ENCODE measurements at regions of chr14 and their contacts with region 1.

Region 1: DNA sequence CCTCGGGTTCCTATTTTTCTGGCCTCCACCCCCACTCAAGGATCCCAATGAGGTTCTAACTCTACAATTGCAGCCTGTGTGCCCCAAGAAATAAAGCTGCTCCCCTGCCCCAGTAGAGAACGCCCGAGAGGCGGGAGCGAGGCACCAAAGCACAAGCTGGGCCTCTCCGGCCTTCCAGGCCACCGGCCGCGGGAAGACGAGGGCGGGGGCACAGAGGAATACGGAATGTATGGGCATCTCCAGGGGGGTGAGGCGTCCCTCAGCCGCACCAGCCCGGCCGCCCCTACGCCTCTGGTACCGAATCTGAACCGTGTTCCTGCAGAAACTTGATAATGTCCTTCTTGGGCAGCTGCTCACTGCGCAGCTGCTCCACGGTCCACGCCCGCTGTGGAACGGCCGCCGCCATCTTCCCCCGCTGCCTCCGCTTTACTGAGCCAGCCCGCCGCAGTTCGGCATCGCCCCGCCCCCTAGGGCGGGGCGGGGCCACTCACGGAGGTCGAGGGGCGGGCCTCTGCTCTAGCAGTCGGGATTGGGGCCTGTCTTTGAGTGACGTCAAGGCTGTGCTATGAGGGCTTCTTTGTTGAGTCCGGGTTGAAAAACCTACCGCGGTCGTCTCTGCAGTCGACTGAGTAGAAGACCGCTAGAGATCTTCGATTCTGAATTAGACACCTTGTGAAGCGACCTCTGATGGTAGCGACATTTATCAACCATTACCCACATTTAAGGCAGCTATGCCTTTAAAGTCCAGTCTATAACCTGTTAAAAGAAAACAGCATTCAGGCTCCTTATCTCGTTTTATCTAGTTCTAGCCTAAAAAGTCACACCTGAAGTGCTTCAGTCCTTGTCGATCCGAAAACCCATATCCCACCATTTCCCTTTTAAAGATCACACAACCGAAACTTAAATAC is at the start of gene FKBP3:
- DNase-seq: peak; percentile 97
- H3K4me3 Mint-ChIP-seq: peak within 1 kb of the TSS; percentile 99
- H3K27ac Mint-ChIP-seq: peak within 1 kb of the TSS; percentile 98
- H3K4me1 Mint-ChIP-seq: peaks cover 37% of the 10 kb centered on the region
- H3K27me3 Mint-ChIP-seq: no peaks in the 10 kb centered on the region
- total RNA-seq, gene FKBP3: 47.6 to 50.8 TPM

Region 2: DNA sequence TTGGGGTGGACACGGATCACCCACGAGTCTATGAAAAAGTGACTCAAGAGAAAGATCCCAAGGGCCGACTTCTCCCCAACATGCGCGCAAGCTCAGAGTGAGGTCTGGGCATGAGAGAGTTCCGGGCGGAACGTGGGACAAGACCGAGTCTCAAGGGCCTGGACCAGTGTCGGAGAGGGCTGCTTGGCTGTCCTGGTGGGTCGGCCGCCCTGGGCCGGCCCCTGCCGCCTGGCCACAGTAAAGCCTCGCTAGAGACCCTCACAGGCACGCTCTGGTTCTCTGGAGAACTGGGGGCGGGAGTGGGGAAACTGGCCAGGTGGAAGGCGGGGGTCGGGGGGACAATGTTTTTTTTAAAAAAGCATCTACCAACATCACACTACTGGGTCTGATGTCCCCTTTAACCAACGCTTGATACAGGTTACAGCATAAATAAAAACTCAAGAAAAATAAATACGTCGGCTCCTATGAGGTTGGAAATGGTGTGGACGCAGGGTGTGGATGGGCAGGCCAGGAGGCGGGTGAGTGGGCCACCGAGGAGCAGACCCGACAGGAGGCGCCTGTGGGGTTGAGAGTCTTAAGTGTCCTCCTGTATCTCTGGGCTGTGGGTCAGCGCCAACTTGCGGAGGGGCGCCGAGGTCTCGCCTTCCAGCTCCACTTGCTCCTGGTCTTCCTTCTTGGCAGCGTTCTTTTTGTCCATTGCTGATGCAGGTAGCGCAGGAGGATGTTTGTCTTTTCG is 247.3 kb before region 1 on chr14:
- CTCF ChIA-PET with region 1: no interaction called
- intact Hi-C with region 1: no loop called
- DNase-seq: no peak
- H3K4me3 Mint-ChIP-seq: no peak overlapping the region
- H3K27ac Mint-ChIP-seq: no peak overlapping the region
- H3K4me1 Mint-ChIP-seq: peaks cover 1% of the 10 kb centered on the region
- H3K27me3 Mint-ChIP-seq: no peaks in the 10 kb centered on the region

Region 3: GRCh38 chr14:44897045-44897844 is 237.1 kb before region 1 on chr14:
- CTCF ChIA-PET with region 1: no interaction called
- intact Hi-C with region 1: loop called (anchors 1 kb)
- DNase-seq: peak; percentile 99
- H3K4me3 Mint-ChIP-seq: peak overlapping the region; percentile 89
- H3K27ac Mint-ChIP-seq: peak overlapping the region; percentile 83
- H3K4me1 Mint-ChIP-seq: peaks cover 13% of the 10 kb centered on the region
- H3K27me3 Mint-ChIP-seq: no peaks in the 10 kb centered on the region

Region 4: DNA sequence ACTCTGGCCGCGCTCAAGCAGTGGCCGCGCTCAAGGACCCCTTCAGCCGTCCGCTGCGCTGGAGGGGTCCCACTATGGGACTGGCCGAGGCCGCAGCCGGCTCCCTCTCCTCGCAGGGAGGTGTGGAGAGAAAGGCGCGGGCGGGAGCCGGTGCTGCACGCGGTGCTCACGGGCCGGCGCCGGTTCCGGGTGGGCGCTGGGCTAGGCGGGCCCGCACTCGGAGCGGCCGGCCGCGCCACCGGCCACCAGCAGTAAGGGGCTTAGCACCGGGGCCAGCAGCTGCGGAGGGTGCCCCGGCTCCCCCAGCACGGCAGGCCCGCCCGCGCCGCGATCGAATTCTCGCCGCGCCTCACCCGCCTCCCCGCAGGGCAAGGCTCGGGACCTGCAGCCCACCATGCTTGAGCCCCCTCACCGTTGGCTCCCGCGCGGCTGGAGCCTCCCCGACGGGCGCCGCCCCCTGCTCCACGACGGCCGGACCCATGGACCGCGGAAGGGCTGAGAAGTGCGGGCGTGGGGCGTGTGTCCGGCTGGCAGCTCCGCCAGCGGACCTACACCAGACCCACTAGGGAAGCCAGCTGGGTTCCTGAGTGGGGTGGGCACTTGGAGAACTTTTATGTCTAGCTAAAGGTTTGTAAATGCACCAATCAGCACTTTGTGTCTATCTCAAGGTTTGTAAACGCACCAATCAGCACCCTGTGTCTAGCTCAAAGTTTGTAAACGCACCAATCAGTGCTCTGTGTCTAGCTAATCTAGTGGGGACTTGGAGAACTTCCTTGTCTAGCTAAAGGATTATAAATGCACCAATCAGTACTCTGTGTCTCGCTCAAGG is 222.1 kb before region 1 on chr14:
- CTCF ChIA-PET with region 1: interaction called, 3 read pairs
- intact Hi-C with region 1: loop called (anchors 1 kb)
- DNase-seq: no peak
- H3K4me3 Mint-ChIP-seq: no peak overlapping the region
- H3K27ac Mint-ChIP-seq: no peak overlapping the region
- H3K4me1 Mint-ChIP-seq: peaks cover 9% of the 10 kb centered on the region
- H3K27me3 Mint-ChIP-seq: peaks cover 23% of the 10 kb centered on the region

Region 5: GRCh38 chr14:45083971-45084722 is 50.2 kb before region 1 on chr14 and contains the start of gene PRPF39:
- CTCF ChIA-PET with region 1: no interaction called
- intact Hi-C with region 1: loop called (anchors 1 kb)
- DNase-seq: peak; percentile 94
- H3K4me3 Mint-ChIP-seq: peak within 1 kb of the TSS; percentile 96
- H3K27ac Mint-ChIP-seq: peak within 1 kb of the TSS; percentile 93
- H3K4me1 Mint-ChIP-seq: peaks cover 49% of the 10 kb centered on the region
- H3K27me3 Mint-ChIP-seq: no peaks in the 10 kb centered on the region
- total RNA-seq, gene PRPF39: 32.0 to 35.6 TPM

Region 6: GRCh38 chr14:45089813-45090212 is 44.5 kb before region 1 on chr14:
- CTCF ChIA-PET with region 1: no interaction called
- intact Hi-C with region 1: loop called (anchors 1 kb)
- DNase-seq: peak; percentile 44
- H3K4me3 Mint-ChIP-seq: no peak overlapping the region
- H3K27ac Mint-ChIP-seq: peak overlapping the region; percentile 3
- H3K4me1 Mint-ChIP-seq: peaks cover 76% of the 10 kb centered on the region
- H3K27me3 Mint-ChIP-seq: no peaks in the 10 kb centered on the region

Region 7: GRCh38 chr14:45114327-45114726 is 20.0 kb before region 1 on chr14:
- CTCF ChIA-PET with region 1: interaction called, 6 read pairs
- intact Hi-C with region 1: loop called (anchors 1 kb)
- DNase-seq: no peak
- H3K4me3 Mint-ChIP-seq: no peak overlapping the region
- H3K27ac Mint-ChIP-seq: peak overlapping the region; percentile 68
- H3K4me1 Mint-ChIP-seq: peaks cover 23% of the 10 kb centered on the region
- H3K27me3 Mint-ChIP-seq: no peaks in the 10 kb centered on the region